ENCODE measurements at regions of chr12 and their contacts with region 1.

Region 1: GRCh38 chr12:127115468-127116035 is 1151.4 kb upstream of the TMEM132C start:
- DNase-seq: no peak
- H3K4me3 ChIP-seq: no peak overlapping the region
- H3K27ac ChIP-seq: no peak overlapping the region
- H3K4me1 ChIP-seq: no peaks in the 10 kb centered on the region
- H3K27me3 ChIP-seq: peaks cover 0 to 3% (median 0%) of the 10 kb centered on the region in 7 donors
- CTCF ChIP-seq: no peak
- POLR2A ChIP-seq: no peak

Region 2: DNA sequence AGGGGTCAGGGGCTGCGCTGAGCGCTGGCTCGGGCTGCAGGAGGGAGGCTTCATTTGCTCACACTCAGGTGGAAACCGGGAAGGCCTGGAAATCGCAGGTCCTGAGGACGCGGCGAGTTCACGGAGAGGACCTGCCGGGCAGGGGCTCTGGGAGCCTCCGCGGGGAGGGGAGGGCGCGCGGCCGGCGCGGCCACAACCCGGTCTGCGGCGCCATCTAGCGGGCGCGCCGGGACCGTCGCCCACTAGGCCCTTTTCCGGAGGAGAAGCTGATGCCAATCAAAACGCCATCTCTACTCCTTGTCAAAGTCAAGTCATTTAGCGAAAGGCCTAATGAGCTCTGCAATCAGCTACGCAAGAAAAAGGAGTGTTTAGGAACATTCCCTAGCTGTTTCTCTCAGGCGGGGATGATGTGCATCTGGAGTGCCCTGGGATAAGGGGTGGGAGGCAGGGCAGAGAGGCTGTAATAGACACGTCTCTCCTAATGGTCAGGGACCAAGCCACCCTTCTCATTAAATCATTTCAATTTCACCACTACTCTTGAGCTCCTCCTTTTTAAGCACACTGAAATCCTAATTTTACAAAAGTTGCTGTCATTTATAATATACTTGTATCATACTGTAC is 265.6 kb after region 1 on chr12:
- intact Hi-C with region 1: loop called (anchors 10 kb)
- DNase-seq: no peak
- H3K4me3 ChIP-seq: peak overlapping the region in 3 of 8 donors; percentile 6 to 34 (median 10)
- H3K27ac ChIP-seq: no peak overlapping the region
- H3K4me1 ChIP-seq: peaks cover 0 to 7% (median 5%) of the 10 kb centered on the region in 6 donors
- H3K27me3 ChIP-seq: peaks cover 0 to 12% (median 0%) of the 10 kb centered on the region in 7 donors
- CTCF ChIP-seq: peak in 9 of 11 experiments; percentile 47 to 76 (median 66)
- POLR2A ChIP-seq: no peak

Measured in spleen (tissue), 13 donors.